Caco-2 (cell line): ENCODE measurements at regions of chr2 and their contacts with region 1.

Region 1: GRCh38 chr2:80199504-80199903 is 105.0 kb downstream of the LRRTM1 start:
- DNase-seq: peak; percentile 76 to 78
- H3K4me3 ChIP-seq: no peak overlapping the region
- H3K4me3 Mint-ChIP-seq: peak overlapping the region; percentile 9
- H3K27ac Mint-ChIP-seq: peak overlapping the region; percentile 82
- H3K4me1 ChIP-seq: peaks cover 32% of the 10 kb centered on the region
- H3K4me1 Mint-ChIP-seq: peaks cover 31% of the 10 kb centered on the region
- H3K27me3 ChIP-seq: no peaks in the 10 kb centered on the region
- H3K27me3 Mint-ChIP-seq: no peaks in the 10 kb centered on the region
- CTCF ChIP-seq: no peak

Region 2: GRCh38 chr2:80149991-80150390 is 49.5 kb before region 1 on chr2:
- CTCF ChIA-PET with region 1: interaction called, 5 read pairs
- POLR2A ChIA-PET with region 1: no interaction called
- intact Hi-C with region 1: loop called (anchors 1 kb)
- DNase-seq: no peak
- H3K4me3 ChIP-seq: no peak overlapping the region
- H3K4me3 Mint-ChIP-seq: no peak overlapping the region
- H3K27ac Mint-ChIP-seq: no peak overlapping the region
- H3K4me1 ChIP-seq: peaks cover 5% of the 10 kb centered on the region; the same call in 1 of the 2 replicates
- H3K4me1 Mint-ChIP-seq: peaks cover 2% of the 10 kb centered on the region
- H3K27me3 ChIP-seq: no peaks in the 10 kb centered on the region
- H3K27me3 Mint-ChIP-seq: no peaks in the 10 kb centered on the region
- CTCF ChIP-seq: no peak

Region 3: DNA sequence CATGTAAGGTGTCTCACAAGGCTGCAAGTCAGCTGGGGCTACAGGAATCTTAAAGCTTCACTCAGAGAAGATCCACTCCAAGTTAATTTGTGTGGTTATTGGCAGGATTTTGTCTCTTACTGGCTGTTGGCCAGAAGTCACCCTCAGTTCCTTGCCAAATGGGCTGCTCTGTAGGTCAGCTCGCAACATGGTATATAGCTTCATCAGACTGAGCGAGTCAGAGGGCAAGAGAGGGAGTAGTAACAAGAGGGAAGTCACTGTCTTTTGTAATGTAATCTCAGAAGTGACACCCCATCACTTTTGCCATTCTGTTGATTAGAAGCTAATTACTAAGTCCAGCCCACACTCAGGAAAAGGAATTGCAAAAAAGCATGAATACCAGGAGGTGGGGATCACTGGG is 14.4 kb before region 1 on chr2:
- CTCF ChIA-PET with region 1: no interaction called
- POLR2A ChIA-PET with region 1: no interaction called
- intact Hi-C with region 1: no loop called
- DNase-seq: no peak
- H3K4me3 ChIP-seq: no peak overlapping the region
- H3K4me3 Mint-ChIP-seq: no peak overlapping the region
- H3K27ac Mint-ChIP-seq: no peak overlapping the region
- H3K4me1 ChIP-seq: no peaks in the 10 kb centered on the region
- H3K4me1 Mint-ChIP-seq: no peaks in the 10 kb centered on the region
- H3K27me3 ChIP-seq: no peaks in the 10 kb centered on the region
- H3K27me3 Mint-ChIP-seq: no peaks in the 10 kb centered on the region
- CTCF ChIP-seq: no peak